CD14-positive monocyte (primary cell): ENCODE measurements at regions of chr1 and their contacts with region 1.

Region 1: DNA sequence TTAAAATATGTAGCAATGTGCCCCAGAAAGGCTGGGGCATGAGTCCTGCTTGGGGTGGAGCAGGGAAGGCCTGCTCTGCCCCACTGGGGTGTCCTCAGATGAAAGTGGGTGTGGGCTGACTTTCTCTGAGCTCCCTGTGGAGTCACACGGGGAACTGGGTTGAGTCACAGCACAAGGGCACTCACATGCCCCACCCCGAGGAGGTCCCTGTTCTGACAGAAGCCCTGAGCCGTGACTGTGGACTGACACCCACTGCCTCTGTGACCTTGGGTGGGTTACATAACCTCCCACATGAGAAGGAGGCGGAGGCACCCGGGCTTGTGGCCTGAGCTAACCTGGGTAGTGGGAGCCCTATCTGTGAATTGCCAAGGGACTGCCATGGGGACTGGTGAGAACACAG is 52.5 kb upstream of the TINAGL1 start:
- DNase-seq: peak; percentile 99 to 100 (median 99)
- H3K4me3 ChIP-seq: peak overlapping the region in 1 of 3 experiments; percentile 44
- H3K4me3 Mint-ChIP-seq: peak overlapping the region; percentile 34 to 77
- H3K27ac ChIP-seq: peak overlapping the region; percentile 100
- H3K27ac Mint-ChIP-seq: peak overlapping the region; percentile 98 to 100 (median 99)
- H3K4me1 ChIP-seq: peaks cover 52 to 60% of the 10 kb centered on the region in 2 donors
- H3K4me1 Mint-ChIP-seq: peaks cover 49% of the 10 kb centered on the region
- H3K27me3 ChIP-seq: no peaks in the 10 kb centered on the region
- H3K27me3 Mint-ChIP-seq: peaks cover 0 to 2% (median 0%) of the 10 kb centered on the region in 3 donors
- CTCF ChIP-seq: no peak

Region 2: GRCh38 chr1:31483012-31483946 is 40.5 kb before region 1 on chr1:
- intact Hi-C with region 1: loop called (anchors 2 kb)
- DNase-seq: peak; percentile 95 to 99 (median 98)
- H3K4me3 ChIP-seq: no peak overlapping the region
- H3K4me3 Mint-ChIP-seq: peak overlapping the region in 1 of 2 donors; percentile 21
- H3K27ac ChIP-seq: peak overlapping the region; percentile 81 to 89
- H3K27ac Mint-ChIP-seq: peak overlapping the region; percentile 96 to 99 (median 98)
- H3K4me1 ChIP-seq: peaks cover 38 to 50% of the 10 kb centered on the region in 2 donors
- H3K4me1 Mint-ChIP-seq: peaks cover 47% of the 10 kb centered on the region
- H3K27me3 ChIP-seq: no peaks in the 10 kb centered on the region
- H3K27me3 Mint-ChIP-seq: peaks cover 0 to 2% (median 0%) of the 10 kb centered on the region in 3 donors
- CTCF ChIP-seq: no peak